Activated naive CD4-positive, alpha-beta T cell treated with anti-CD3 and anti-CD28 coated beads for 36 hours (primary cell): ENCODE measurements at regions of chr7 and their contacts with region 1.

Region 1: DNA sequence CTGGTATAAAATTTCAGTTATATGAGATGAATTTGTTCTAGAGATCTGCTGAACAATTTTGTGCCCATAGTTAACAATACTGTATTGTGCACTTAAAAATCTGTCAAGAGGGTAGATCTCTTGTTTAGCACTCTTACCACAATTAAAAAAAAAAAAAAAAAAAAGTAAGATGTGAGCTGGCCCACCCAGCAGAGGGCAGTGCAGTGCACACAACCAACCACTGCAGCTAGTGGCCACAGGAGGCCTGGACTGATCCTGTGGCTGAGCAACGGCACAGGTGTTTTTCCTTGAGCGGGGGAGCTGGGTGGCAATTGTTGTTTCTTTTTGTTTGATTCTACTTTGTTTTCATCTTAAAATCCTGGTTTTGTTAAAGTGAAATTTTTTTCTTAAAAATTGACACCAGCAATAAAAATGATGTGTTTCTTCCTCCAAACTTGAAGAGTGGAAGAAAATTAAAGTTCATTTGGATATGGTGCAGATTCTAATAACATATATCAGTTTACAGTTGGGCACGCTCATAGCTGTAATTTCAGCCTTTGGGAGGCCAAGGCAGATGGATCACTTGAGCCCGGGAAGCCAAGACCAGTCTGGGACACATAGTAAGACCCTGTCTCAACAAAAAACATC is 171.1 kb upstream of the TBX20 start:
- DNase-seq: peak; percentile 69
- H3K4me3 Mint-ChIP-seq: no peak overlapping the region
- H3K27ac Mint-ChIP-seq: no peak overlapping the region
- H3K4me1 Mint-ChIP-seq: no peaks in the 10 kb centered on the region
- H3K27me3 Mint-ChIP-seq: peaks cover 17% of the 10 kb centered on the region

Region 2: GRCh38 chr7:35366167-35367155 is 58.5 kb before region 1 on chr7:
- CTCF ChIA-PET with region 1: no interaction called
- intact Hi-C with region 1: no loop called
- DNase-seq: no peak
- H3K4me3 Mint-ChIP-seq: no peak overlapping the region
- H3K27ac Mint-ChIP-seq: no peak overlapping the region
- H3K4me1 Mint-ChIP-seq: no peaks in the 10 kb centered on the region
- H3K27me3 Mint-ChIP-seq: peaks cover 3% of the 10 kb centered on the region

Region 3: GRCh38 chr7:35519971-35520809 is 95.2 kb after region 1 on chr7:
- CTCF ChIA-PET with region 1: interaction called, 28 read pairs
- intact Hi-C with region 1: loop called (anchors 1 kb)
- DNase-seq: peak; percentile 73
- H3K4me3 Mint-ChIP-seq: no peak overlapping the region
- H3K27ac Mint-ChIP-seq: no peak overlapping the region
- H3K4me1 Mint-ChIP-seq: no peaks in the 10 kb centered on the region
- H3K27me3 Mint-ChIP-seq: peaks cover 4% of the 10 kb centered on the region

Region 4: DNA sequence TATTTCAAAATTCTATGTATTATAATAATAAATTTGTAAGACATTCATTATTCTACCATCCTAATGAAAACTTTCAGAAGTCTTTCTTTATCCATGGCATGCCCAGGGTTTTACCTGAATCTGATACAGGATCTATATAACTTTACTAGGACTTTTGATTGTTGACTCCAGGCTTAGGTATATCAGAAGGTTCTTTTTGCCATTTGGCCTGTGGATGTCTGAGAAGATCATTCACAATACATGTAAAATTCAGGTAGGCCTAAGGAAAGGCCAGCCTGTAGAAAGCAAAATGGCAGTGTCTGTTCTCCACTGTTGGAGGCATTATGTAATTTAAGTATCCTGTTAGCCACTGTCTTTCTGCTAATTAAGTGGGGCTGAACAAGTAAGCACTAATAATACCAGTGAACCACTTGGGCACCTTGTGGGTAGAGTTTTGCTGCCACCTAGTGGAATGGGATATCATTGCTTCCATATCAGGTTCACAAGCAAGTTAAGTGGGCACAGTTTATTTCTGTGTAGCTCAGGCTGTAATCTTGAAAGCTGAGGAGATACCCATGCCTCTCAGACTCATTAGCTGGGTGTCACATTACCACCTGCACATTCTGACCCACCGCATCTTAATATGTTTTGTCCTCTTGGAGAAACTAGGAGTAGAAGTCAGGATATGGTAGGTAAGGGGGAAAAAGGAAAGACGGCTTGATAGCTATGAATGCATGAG is 481.4 kb after region 1 on chr7:
- CTCF ChIA-PET with region 1: interaction called, 4 read pairs
- intact Hi-C with region 1: loop called (anchors 1 kb)
- DNase-seq: peak; percentile 82
- H3K4me3 Mint-ChIP-seq: no peak overlapping the region
- H3K27ac Mint-ChIP-seq: no peak overlapping the region
- H3K4me1 Mint-ChIP-seq: peaks cover 4% of the 10 kb centered on the region
- H3K27me3 Mint-ChIP-seq: no peaks in the 10 kb centered on the region